Activated T-helper 2 cell treated with anti-CD3 and anti-CD28 coated beads, Interferon-gamma antibody, Interleukin-2, Interleukin-4, amounts not matched to agents 10 μg/mL and 5 μg/mL and 100 μg/mL, durations not matched to agents 14 hours and 24 hours and 36 hours (primary cell): ENCODE measurements at regions of chr3 and their contacts with region 1.

Region 1: DNA sequence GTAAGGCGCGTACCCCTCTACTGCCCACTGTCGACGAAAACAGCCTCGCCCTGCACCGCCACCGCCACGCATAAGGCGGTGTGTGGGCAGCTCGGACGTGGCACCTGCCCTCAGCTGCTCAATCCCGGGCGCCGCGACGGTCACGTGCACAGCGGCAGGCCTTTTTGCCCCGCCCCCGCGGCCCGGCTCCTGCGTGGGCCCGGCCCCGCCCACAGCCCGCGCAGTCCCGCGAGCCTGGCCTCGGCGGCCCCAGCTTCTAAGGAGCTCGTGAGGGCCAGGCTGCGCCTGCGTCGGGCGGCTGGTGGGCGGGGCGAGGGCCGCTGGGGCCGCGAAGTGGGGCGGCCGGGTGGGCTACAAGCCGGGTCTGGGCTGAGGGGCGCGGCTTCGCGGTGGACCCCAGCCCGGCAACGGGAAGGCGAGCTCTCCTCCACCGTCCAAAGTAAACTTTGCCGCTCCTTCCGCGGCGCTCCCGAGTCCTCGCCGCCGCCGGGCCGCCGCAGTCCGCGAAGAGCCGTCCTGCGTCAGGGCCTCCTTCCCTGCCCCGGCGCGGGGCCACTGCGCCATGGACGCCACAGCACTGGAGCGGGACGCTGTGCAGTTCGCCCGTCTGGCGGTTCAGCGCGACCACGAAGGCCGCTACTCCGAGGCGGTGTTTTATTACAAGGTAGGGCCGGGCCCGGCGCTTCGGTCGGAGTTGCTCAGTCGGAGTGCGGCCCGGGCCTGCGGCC is at the start of gene CAPN7:
- DNase-seq: peak; percentile 93
- H3K4me3 Mint-ChIP-seq: peak within 1 kb of the TSS; percentile 96
- H3K27ac Mint-ChIP-seq: peak within 1 kb of the TSS; percentile 92
- H3K4me1 Mint-ChIP-seq: peaks cover 31% of the 10 kb centered on the region
- H3K27me3 Mint-ChIP-seq: no peaks in the 10 kb centered on the region
- total RNA-seq, gene CAPN7: 31.8 and 33.4 TPM in 2 replicates

Region 2: DNA sequence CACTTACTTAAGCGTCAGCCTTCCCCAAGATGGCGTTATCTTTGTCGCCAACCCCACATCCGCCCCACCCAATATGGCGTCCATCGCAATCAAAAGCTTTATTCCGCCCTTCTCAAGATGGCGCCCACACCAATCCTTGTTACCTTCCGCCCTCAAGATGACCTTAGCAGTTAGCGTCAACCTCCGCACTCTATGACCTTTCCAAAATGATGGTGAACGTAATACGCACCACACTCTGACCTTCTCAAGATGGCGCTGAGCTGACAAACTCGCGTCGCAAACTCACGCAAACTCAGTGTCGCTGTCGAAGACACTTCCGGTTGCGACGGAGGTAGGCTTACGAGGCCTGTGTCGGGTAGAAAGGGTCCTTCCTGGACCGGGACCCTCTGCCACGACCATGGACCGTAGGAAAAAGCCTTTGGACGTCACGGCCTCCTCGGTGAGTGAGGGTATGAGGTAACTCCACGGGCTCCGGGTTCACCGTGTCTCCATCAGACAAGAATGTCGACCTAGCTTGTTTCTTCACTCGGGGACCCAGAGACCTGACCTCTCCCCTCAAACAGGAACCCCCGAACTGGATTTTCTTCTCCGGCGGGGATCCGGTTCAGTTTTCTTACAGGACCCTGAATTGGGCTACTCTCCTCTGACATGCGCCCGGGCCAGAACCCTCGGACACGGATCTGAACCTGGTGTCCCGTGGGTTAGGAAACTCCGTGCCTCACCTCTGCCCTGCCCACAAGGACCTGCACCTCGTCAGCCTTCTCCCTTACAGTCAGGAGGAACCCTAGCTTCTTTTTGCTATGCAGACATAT is 554.5 kb before region 1 on chr3 and contains the start of gene CCDC174:
- intact Hi-C with region 1: loop called (anchors 5 kb)
- DNase-seq: peak; percentile 94
- H3K4me3 Mint-ChIP-seq: peak within 1 kb of the TSS; percentile 92
- H3K27ac Mint-ChIP-seq: peak within 1 kb of the TSS; percentile 95
- H3K4me1 Mint-ChIP-seq: peaks cover 30% of the 10 kb centered on the region
- H3K27me3 Mint-ChIP-seq: no peaks in the 10 kb centered on the region
- total RNA-seq, gene CCDC174: 15.0 and 18.8 TPM in 2 replicates

Region 3: GRCh38 chr3:15064835-15065549 is 141.1 kb before region 1 on chr3 and contains the start of gene MRPS25:
- intact Hi-C with region 1: loop called (anchors 1 kb)
- DNase-seq: peak; percentile 88
- H3K4me3 Mint-ChIP-seq: peak within 1 kb of the TSS; percentile 94
- H3K27ac Mint-ChIP-seq: peak within 1 kb of the TSS; percentile 93
- H3K4me1 Mint-ChIP-seq: peaks cover 20% of the 10 kb centered on the region
- H3K27me3 Mint-ChIP-seq: no peaks in the 10 kb centered on the region
- total RNA-seq, gene MRPS25: 83.9 and 91.6 TPM in 2 replicates

Region 4: GRCh38 chr3:15081960-15082664 is 124.0 kb before region 1 on chr3:
- intact Hi-C with region 1: no loop called
- DNase-seq: no peak
- H3K4me3 Mint-ChIP-seq: no peak overlapping the region
- H3K27ac Mint-ChIP-seq: no peak overlapping the region
- H3K4me1 Mint-ChIP-seq: no peaks in the 10 kb centered on the region
- H3K27me3 Mint-ChIP-seq: no peaks in the 10 kb centered on the region

Region 5: DNA sequence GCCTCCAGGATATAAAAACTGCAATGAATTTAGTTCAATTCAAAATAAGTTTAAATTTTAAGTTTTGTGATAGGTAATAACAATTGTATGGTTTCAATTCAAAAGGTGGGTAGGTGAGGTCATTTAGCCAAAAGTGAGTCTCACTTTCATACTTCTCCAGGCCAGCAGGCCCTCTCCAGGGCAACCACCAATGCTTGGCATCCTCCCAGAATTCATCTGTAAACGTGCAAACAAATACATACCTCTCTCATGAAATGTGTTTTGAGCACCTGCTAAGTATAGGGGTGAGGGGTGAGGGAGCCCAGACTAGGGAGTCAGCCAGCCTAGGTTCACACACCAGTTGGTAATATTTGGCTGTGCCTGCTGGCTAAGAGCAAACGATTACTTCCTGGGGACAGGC is 85.1 kb before region 1 on chr3:
- intact Hi-C with region 1: loop called (anchors 2 kb)
- DNase-seq: no peak
- H3K4me3 Mint-ChIP-seq: no peak overlapping the region
- H3K27ac Mint-ChIP-seq: no peak overlapping the region
- H3K4me1 Mint-ChIP-seq: peaks cover 10% of the 10 kb centered on the region
- H3K27me3 Mint-ChIP-seq: peaks cover 1% of the 10 kb centered on the region

Region 6: DNA sequence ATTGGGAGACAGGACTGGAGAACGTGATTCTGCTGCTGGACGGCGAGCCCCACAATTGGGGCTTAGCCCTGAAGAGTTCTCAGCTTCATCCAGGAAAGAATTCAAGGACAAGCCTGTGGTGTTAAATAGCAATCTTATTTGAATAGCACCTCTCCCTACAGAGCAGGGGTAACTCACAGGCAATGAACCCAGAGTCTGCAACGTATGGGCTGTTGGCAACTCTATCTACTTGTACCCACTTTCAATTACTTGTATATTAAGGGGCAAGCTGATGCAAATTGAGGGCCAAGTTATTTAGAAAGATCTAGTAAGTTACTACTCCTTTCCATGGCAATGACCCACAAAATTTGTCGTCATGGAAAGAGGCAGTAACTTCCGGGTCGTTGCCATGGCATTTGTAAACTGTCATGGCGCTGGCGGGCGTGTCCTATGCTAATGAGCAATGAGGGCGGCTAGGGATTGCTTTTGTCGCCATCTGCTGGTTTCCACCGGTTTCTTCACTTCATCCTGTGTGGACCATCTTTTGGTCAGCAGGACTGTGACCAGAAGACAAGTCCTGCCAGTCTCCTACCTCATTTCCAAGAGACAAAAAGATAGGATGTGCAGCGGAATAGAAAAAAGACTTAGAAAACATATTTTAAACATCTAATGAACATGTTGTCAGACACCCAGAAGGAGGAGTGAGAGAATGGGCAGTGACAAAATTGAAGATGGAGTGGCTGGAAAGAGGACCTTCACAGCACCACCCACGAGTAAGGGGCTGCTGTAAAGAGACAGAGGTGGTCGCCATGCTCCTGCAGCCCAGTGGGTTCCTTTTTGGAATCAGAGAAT is 172.1 kb after region 1 on chr3:
- intact Hi-C with region 1: loop called (anchors 2 kb)
- DNase-seq: peak; percentile 92
- H3K4me3 Mint-ChIP-seq: no peak overlapping the region
- H3K27ac Mint-ChIP-seq: peak overlapping the region; percentile 76
- H3K4me1 Mint-ChIP-seq: peaks cover 10% of the 10 kb centered on the region
- H3K27me3 Mint-ChIP-seq: no peaks in the 10 kb centered on the region

Region 7: GRCh38 chr3:15557511-15557946 is 351.4 kb after region 1 on chr3:
- intact Hi-C with region 1: loop called (anchors 2 kb)
- DNase-seq: peak; percentile 71
- H3K4me3 Mint-ChIP-seq: no peak overlapping the region
- H3K27ac Mint-ChIP-seq: no peak overlapping the region
- H3K4me1 Mint-ChIP-seq: peaks cover 22% of the 10 kb centered on the region
- H3K27me3 Mint-ChIP-seq: no peaks in the 10 kb centered on the region